ENCODE measurements at regions of chr16 and their contacts with region 1.

Region 1: GRCh38 chr16:89217388-89218191 is at the start of gene ZNF778:
- DNase-seq: peak; percentile 64 to 93 (median 76)
- ATAC-seq: peak; percentile 75
- H3K4me3 ChIP-seq: peak within 1 kb of the TSS; percentile 94
- H3K4me3 Mint-ChIP-seq: peak within 1 kb of the TSS; percentile 82
- H3K27ac ChIP-seq: peak within 1 kb of the TSS; percentile 96 to 98
- H3K27ac Mint-ChIP-seq: peak within 1 kb of the TSS; percentile 80
- H3K4me1 ChIP-seq: peaks cover 30% of the 10 kb centered on the region
- H3K4me1 Mint-ChIP-seq: peaks cover 33% of the 10 kb centered on the region
- H3K27me3 ChIP-seq: no peaks in the 10 kb centered on the region
- H3K27me3 Mint-ChIP-seq: no peaks in the 10 kb centered on the region
- CTCF ChIP-seq: no peak
- total RNA-seq, gene ZNF778: 4.0 to 6.7 TPM

Region 2: GRCh38 chr16:88569985-88570690 is 647.5 kb before region 1 on chr16 and contains the start of gene ZC3H18:
- CTCF ChIA-PET with region 1: no interaction called
- POLR2A ChIA-PET with region 1: interaction called, 12 read pairs
- intact Hi-C with region 1: loop called in 1 of 2 experiments (anchors 2 kb)
- DNase-seq: peak; percentile 93 to 100 (median 98)
- ATAC-seq: peak; percentile 93
- H3K4me3 ChIP-seq: peak within 1 kb of the TSS; percentile 65
- H3K4me3 Mint-ChIP-seq: peak within 1 kb of the TSS; percentile 88
- H3K27ac ChIP-seq: peak within 1 kb of the TSS; percentile 75 to 78
- H3K27ac Mint-ChIP-seq: peak within 1 kb of the TSS; percentile 87
- H3K4me1 ChIP-seq: peaks cover 31% of the 10 kb centered on the region
- H3K4me1 Mint-ChIP-seq: peaks cover 33% of the 10 kb centered on the region
- H3K27me3 ChIP-seq: no peaks in the 10 kb centered on the region
- H3K27me3 Mint-ChIP-seq: no peaks in the 10 kb centered on the region
- CTCF ChIP-seq: no peak
- total RNA-seq, gene ZC3H18: 92.6 to 93.7 TPM

Region 3: DNA sequence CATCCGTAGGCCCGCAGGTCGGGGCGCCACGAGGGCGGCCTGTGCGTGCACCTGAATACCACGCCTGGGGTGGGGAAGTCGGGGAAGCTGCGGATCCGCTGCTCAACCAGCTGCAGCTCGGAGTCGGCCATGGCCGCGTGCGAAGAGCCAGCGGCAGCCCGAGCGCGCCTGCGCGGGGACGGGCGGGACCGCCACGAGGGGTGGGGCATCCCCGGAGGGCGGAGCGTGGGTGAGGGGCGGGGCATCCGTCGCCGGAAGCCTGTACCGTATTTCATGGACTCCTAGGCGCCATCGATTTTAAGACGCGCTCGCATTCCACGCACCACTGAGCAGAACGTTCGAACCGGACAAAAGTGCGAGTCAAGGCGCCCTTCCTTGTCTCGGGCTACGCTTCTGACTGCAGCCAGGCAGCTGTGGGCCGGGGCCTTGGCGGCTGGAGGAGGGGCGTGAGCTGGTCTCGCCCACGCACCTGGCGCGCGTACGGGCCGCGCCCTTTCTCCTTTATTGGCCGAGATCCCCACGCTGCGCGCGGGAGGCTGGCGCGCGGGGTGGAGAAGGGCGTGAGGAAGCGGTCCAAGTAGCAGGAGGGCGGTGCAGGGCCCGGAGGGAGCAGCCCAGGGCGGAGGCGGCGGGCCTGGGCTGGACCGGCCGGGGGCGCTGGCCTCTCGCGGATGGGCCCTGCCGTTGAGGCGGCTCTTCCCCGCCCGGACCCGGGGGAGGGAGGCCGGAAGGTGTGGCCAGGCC is 405.6 kb before region 1 on chr16 and contains the start of gene APRT:
- CTCF ChIA-PET with region 1: no interaction called
- POLR2A ChIA-PET with region 1: interaction called, 20 read pairs
- intact Hi-C with region 1: loop called (anchors 1 to 2 kb)
- DNase-seq: peak; percentile 93 to 99 (median 98)
- ATAC-seq: peak; percentile 90
- H3K4me3 ChIP-seq: peak within 1 kb of the TSS; percentile 75
- H3K4me3 Mint-ChIP-seq: peak within 1 kb of the TSS; percentile 99
- H3K27ac ChIP-seq: peak within 1 kb of the TSS; percentile 64 to 70
- H3K27ac Mint-ChIP-seq: peak within 1 kb of the TSS; percentile 95
- H3K4me1 ChIP-seq: peaks cover 29% of the 10 kb centered on the region
- H3K4me1 Mint-ChIP-seq: peaks cover 4% of the 10 kb centered on the region
- H3K27me3 ChIP-seq: no peaks in the 10 kb centered on the region
- H3K27me3 Mint-ChIP-seq: no peaks in the 10 kb centered on the region
- CTCF ChIP-seq: no peak
- total RNA-seq, gene APRT: 153 to 154 TPM

Region 4: DNA sequence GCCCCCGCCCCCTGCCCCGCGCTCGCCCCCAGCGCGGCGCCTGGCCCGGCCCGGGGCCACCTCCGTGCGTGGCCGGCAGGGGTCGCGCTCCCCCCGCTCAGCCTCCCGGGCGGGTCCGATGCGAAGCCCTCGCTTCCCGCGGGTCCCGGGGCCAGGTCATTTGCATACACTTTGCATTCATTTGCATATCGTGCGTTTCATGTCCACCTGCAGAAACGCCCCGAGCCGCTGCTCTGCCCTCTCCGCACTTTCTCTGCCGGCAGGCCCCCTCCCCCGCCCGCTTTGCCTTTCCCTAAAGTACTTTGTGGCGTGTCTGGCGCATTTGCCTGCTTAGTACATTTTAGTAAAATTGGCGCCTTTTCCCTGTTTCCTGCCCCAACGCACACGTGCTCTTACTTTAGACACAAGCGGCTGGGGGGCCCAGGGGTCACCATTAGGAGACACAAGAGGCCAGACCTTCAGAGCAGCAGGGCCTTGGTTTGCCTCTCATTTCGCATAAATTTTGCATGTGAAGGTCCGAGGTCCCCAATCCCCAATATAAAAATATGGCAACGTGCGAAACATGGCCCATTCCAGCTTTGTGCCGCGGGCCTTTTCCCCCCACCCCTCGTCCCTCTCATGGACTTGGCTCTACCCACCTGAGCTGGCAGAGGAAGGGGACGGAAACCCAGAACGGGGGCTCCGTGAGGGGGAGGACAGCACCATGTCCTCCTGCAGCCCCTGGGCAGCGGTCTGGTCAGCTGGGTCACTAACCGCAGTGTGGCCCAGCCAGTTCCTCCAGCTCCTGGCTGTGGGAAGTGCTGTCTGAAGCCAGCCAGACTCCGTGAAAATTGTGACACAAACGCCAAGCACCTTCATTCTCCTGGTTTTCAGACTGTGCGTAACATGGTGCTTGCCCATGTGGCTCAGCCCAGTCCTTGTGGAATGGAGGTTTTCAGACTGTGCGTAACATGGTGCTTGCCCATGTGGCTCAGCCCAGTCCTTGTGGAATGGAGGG is 275.4 kb before region 1 on chr16:
- CTCF ChIA-PET with region 1: no interaction called
- POLR2A ChIA-PET with region 1: no interaction called
- intact Hi-C with region 1: loop called (anchors 1 kb)
- DNase-seq: peak; percentile 31 to 79 (median 51)
- ATAC-seq: peak; percentile 74
- H3K4me3 ChIP-seq: no peak overlapping the region
- H3K4me3 Mint-ChIP-seq: peak overlapping the region; percentile 56
- H3K27ac ChIP-seq: no peak overlapping the region
- H3K27ac Mint-ChIP-seq: no peak overlapping the region
- H3K4me1 ChIP-seq: peaks cover 40% of the 10 kb centered on the region
- H3K4me1 Mint-ChIP-seq: peaks cover 8% of the 10 kb centered on the region
- H3K27me3 ChIP-seq: peaks cover 45 to 53% of the 10 kb centered on the region in 2 experiments
- H3K27me3 Mint-ChIP-seq: peaks cover 48% of the 10 kb centered on the region
- CTCF ChIP-seq: peak; percentile 58

Region 5: GRCh38 chr16:89115216-89115861 is 102.3 kb before region 1 on chr16:
- CTCF ChIA-PET with region 1: interaction called, 3 read pairs
- POLR2A ChIA-PET with region 1: interaction called, 13 read pairs
- intact Hi-C with region 1: no loop called
- DNase-seq: peak in 13 of 14 experiments; percentile 85 to 97 (median 89)
- ATAC-seq: peak; percentile 82
- H3K4me3 ChIP-seq: peak overlapping the region; percentile 56
- H3K4me3 Mint-ChIP-seq: peak overlapping the region; percentile 77
- H3K27ac ChIP-seq: peak overlapping the region; percentile 72 to 79
- H3K27ac Mint-ChIP-seq: no peak overlapping the region
- H3K4me1 ChIP-seq: peaks cover 75% of the 10 kb centered on the region
- H3K4me1 Mint-ChIP-seq: peaks cover 54% of the 10 kb centered on the region
- H3K27me3 ChIP-seq: no peaks in the 10 kb centered on the region
- H3K27me3 Mint-ChIP-seq: no peaks in the 10 kb centered on the region
- CTCF ChIP-seq: no peak

Region 6: DNA sequence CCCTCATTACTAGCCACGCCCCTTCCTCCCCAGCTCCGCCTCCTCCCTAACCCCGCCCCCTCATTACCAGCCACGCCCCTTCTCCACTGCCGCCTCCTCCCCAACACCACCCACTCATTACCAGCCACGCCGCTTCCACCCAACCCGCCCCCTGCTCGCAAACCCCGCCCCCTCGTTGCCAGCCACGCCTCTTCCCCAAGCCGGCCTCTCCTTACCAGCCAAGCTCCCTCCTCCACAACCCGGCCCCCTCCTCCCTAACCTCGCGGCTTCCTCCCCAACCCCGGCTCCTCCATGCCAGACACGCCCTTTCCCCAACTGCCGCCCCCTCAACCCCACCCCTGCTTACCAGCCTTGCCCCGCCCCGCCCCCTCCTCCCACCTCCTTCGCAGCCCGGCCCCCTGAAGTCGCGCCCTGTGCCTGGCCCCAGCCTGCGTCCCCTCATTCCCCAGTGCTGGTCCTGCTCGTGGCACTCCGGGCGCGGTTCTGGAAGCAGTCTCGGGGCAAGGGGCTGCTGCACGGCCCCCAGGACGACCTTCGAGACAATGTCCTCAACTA is 24.5 kb before region 1 on chr16:
- CTCF ChIA-PET with region 1: interaction called, 3 read pairs
- POLR2A ChIA-PET with region 1: interaction called, 6 read pairs
- intact Hi-C with region 1: loop called in 1 of 2 experiments (anchors 2 kb)
- DNase-seq: peak in 6 of 14 experiments; percentile 26 to 80 (median 60)
- ATAC-seq: peak; percentile 50
- H3K4me3 ChIP-seq: no peak overlapping the region
- H3K4me3 Mint-ChIP-seq: no peak overlapping the region
- H3K27ac ChIP-seq: no peak overlapping the region
- H3K27ac Mint-ChIP-seq: no peak overlapping the region
- H3K4me1 ChIP-seq: peaks cover 18% of the 10 kb centered on the region
- H3K4me1 Mint-ChIP-seq: peaks cover 4% of the 10 kb centered on the region
- H3K27me3 ChIP-seq: no peaks in the 10 kb centered on the region
- H3K27me3 Mint-ChIP-seq: peaks cover 5% of the 10 kb centered on the region
- CTCF ChIP-seq: no peak

Region 7: DNA sequence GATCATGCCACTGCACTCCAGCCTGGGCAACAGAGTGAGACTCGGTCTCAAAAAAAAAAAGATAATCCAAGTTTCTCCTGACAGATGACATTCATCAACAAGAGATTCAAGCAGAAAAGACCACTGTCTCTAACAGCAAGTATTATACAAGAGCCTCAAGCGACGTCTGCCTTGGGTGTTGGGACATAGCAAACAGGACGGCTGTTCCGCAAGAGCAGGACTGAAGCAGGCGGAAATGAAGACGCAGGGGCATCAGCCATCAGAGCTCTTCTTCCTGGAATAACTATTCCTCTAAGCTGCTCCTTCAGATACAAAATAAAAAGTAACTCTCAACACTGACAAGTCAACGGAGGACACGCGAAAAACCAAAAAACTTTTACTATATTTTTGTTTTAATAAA is 218.8 kb after region 1 on chr16:
- CTCF ChIA-PET with region 1: no interaction called
- POLR2A ChIA-PET with region 1: no interaction called
- intact Hi-C with region 1: no loop called
- DNase-seq: peak in 1 of 14 experiments; percentile 38
- ATAC-seq: no peak
- H3K4me3 ChIP-seq: no peak overlapping the region
- H3K4me3 Mint-ChIP-seq: peak overlapping the region; percentile 78
- H3K27ac ChIP-seq: no peak overlapping the region
- H3K27ac Mint-ChIP-seq: no peak overlapping the region
- H3K4me1 ChIP-seq: peaks cover 93% of the 10 kb centered on the region
- H3K4me1 Mint-ChIP-seq: no peaks in the 10 kb centered on the region
- H3K27me3 ChIP-seq: no peaks in the 10 kb centered on the region
- H3K27me3 Mint-ChIP-seq: no peaks in the 10 kb centered on the region
- CTCF ChIP-seq: no peak

Measured in CD4-positive, alpha-beta T cell (primary cell).